SK-N-SH (cell line): ENCODE measurements at regions of chr14 and their contacts with region 1.

Region 1: GRCh38 chr14:39102969-39103957 is at the start of gene SEC23A:
- DNase-seq: peak; percentile 87
- H3K4me3 ChIP-seq: peak within 1 kb of the TSS; percentile 63 to 69
- H3K27ac ChIP-seq: peak within 1 kb of the TSS; percentile 76 to 77
- H3K4me1 ChIP-seq: no peaks in the 10 kb centered on the region
- H3K27me3 ChIP-seq: no peaks in the 10 kb centered on the region
- CTCF ChIP-seq: no peak
- EP300 ChIP-seq: no peak
- RAD21 ChIP-seq: no peak
- polyA plus RNA-seq, gene SEC23A: 30.0 and 39.4 TPM in 2 replicates

Region 2: DNA sequence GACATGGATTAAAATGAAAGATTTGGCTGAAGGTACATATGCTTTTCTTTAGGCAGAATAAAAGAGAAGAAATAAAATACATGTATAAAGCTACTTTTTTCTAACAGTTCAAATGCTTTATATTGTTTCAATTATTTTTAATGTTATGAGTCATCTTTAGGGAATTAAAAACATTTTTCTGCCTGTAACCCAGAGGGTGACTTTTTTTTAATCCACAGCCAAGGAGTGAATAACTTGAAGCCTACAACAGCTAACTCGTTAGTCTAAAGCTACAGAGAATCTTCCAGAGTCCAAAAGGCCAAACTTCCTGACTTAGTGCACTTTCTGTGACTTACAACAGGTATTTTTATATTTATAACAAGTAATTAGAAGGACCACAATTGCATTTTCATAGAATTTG is 151.8 kb before region 1 on chr14:
- CTCF ChIA-PET with region 1: no interaction called
- POLR2A ChIA-PET with region 1: no interaction called
- DNase-seq: no peak
- H3K4me3 ChIP-seq: no peak overlapping the region
- H3K27ac ChIP-seq: no peak overlapping the region
- H3K4me1 ChIP-seq: no peaks in the 10 kb centered on the region
- H3K27me3 ChIP-seq: no peaks in the 10 kb centered on the region
- CTCF ChIP-seq: no peak
- EP300 ChIP-seq: no peak; a peak in 1 of 4 replicates
- RAD21 ChIP-seq: no peak

Region 3: GRCh38 chr14:39087493-39087892 is 15.8 kb before region 1 on chr14:
- CTCF ChIA-PET with region 1: no interaction called
- POLR2A ChIA-PET with region 1: no interaction called
- DNase-seq: no peak
- H3K4me3 ChIP-seq: no peak overlapping the region
- H3K27ac ChIP-seq: no peak overlapping the region
- H3K4me1 ChIP-seq: no peaks in the 10 kb centered on the region
- H3K27me3 ChIP-seq: no peaks in the 10 kb centered on the region
- CTCF ChIP-seq: no peak
- EP300 ChIP-seq: no peak
- RAD21 ChIP-seq: no peak

Region 4: GRCh38 chr14:39114073-39114838 is 11.0 kb after region 1 on chr14 and contains the start of gene GEMIN2:
- CTCF ChIA-PET with region 1: no interaction called
- POLR2A ChIA-PET with region 1: interaction called, 13 read pairs
- DNase-seq: peak; percentile 81
- H3K4me3 ChIP-seq: peak within 1 kb of the TSS; percentile 69 to 73
- H3K27ac ChIP-seq: peak within 1 kb of the TSS; percentile 40 to 73; a peak in 3 of 4 replicates
- H3K4me1 ChIP-seq: no peaks in the 10 kb centered on the region; a peak in 2 of 4 replicates
- H3K27me3 ChIP-seq: no peaks in the 10 kb centered on the region
- CTCF ChIP-seq: no peak
- EP300 ChIP-seq: no peak
- RAD21 ChIP-seq: no peak
- polyA plus RNA-seq, gene GEMIN2: 8.4 and 13.2 TPM in 2 replicates

Region 5: DNA sequence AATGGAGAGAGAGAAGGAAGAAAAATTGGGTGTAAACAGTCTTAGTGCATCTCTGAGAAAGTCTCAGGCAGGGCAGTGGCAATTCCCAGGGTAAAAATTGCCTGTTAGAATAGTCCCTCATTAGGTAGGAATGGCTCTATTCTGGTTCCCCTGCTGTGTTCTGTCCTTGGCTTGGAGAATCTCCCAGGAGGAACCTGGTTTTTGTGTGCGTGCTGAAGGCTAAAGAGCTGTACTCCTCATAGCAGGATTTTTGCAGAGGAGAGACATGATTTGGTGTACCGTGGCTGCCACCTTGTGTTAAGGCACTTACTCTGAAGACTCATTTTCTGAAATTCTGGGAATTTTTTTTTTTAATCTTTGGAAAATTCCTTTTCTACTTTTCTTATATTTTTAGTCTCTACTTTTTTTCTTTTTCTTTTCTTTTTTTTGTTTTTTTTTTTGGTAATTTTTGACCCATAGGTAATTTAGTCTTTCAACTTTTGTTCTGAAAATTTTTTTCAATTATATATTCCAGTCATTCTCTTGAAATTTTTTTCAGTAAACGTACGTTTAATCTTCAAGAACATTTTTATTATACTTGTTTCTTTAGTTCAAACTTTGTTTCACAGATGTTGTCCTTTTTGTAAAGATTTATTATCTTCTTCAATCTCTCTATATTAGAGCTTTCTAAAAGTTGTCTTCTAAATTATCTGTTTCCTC is 265.1 kb after region 1 on chr14:
- CTCF ChIA-PET with region 1: interaction called, 11 read pairs
- POLR2A ChIA-PET with region 1: no interaction called
- DNase-seq: peak; percentile 38
- H3K4me3 ChIP-seq: no peak overlapping the region
- H3K27ac ChIP-seq: no peak overlapping the region
- H3K4me1 ChIP-seq: no peaks in the 10 kb centered on the region
- H3K27me3 ChIP-seq: no peaks in the 10 kb centered on the region
- CTCF ChIP-seq: peak; percentile 57
- EP300 ChIP-seq: no peak
- RAD21 ChIP-seq: peak; percentile 75

Region 6: GRCh38 chr14:39381366-39381765 is 278.1 kb after region 1 on chr14:
- CTCF ChIA-PET with region 1: no interaction called
- POLR2A ChIA-PET with region 1: no interaction called
- DNase-seq: no peak
- H3K4me3 ChIP-seq: no peak overlapping the region
- H3K27ac ChIP-seq: no peak overlapping the region
- H3K4me1 ChIP-seq: peaks cover 0 to 13% of the 10 kb centered on the region in 2 experiments; a peak in 1 of 4 replicates
- H3K27me3 ChIP-seq: no peaks in the 10 kb centered on the region
- CTCF ChIP-seq: no peak
- EP300 ChIP-seq: no peak
- RAD21 ChIP-seq: no peak